ENCODE measurements at regions of chr16 and their contacts with region 1.

Region 1: DNA sequence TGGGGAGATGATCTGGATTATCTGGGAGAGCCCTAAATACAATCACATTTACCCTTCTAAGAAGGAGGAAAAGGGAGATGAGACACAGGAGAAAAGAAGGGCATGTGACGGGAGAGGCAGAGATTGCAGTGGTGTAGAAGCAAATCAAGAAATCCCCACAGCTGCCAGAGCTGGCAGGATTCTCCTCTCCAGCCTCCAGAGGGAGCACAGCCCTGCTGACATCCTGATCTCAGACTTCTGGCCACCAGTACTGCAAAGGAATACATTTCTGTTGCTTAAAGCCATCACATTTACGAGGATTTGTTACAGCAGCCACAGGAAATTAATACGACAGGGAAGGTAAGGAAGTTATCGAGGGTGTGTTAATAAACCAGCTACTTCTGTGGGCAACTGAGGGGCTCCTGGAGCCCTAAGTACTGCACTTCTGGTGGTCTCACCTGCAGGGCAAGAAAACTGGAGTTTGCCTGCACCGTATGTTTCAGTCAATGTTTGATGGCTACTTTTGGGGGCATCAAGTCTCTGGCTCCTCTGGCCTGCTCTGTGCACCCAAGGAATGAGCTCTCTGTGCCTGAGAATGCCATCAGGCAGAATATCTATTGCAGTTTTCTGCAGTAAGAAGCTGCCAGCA is 22.9 kb upstream of the CDH13 start:
- DNase-seq: peak; percentile 60 to 78
- ATAC-seq: peak; percentile 51
- H3K4me3 ChIP-seq: no peak overlapping the region
- H3K27ac ChIP-seq: no peak overlapping the region
- H3K4me1 ChIP-seq: no peaks in the 10 kb centered on the region
- H3K27me3 ChIP-seq: no peaks in the 10 kb centered on the region

Region 2: DNA sequence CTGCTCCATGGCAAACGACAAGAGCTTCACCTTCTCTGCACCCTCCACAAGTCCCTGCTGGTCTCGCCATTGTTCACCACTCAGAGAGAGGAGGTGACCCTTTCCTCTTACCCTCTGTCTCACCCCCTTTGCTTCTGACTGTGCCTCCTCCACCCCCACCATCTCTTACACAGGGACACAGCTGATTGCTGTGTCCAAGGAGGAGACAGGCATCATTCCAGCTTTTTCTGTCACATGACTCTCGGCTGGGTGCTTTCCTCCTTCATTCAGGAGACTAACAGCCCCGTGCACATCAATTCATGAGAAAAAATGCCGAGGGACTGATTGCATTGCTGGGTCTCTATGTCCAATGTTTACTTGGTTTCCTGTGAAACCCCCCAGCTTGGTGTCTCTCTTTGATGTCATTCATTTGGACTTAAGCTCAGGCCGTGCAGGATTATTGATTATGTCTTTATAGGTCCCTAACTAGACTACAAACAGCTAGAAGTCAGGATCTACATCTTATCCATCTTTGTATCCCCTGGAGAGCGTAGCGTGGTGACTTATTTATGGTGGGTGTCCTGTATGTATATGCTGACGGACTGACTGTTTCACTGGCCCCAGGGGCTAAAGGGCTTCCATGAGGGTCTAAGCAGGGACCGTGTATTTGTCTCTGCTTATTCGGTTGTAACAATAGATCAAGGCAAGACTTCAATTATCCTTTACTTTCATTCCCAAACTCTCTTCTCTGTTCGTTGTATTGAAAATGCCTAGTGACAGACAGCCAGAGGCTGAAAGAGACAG is 59.3 kb before region 1 on chr16:
- intact Hi-C with region 1: no loop called
- DNase-seq: no peak
- ATAC-seq: no peak
- H3K4me3 ChIP-seq: no peak overlapping the region
- H3K27ac ChIP-seq: no peak overlapping the region
- H3K4me1 ChIP-seq: no peaks in the 10 kb centered on the region
- H3K27me3 ChIP-seq: peaks cover 0 to 3% of the 10 kb centered on the region in 2 donors

Region 3: DNA sequence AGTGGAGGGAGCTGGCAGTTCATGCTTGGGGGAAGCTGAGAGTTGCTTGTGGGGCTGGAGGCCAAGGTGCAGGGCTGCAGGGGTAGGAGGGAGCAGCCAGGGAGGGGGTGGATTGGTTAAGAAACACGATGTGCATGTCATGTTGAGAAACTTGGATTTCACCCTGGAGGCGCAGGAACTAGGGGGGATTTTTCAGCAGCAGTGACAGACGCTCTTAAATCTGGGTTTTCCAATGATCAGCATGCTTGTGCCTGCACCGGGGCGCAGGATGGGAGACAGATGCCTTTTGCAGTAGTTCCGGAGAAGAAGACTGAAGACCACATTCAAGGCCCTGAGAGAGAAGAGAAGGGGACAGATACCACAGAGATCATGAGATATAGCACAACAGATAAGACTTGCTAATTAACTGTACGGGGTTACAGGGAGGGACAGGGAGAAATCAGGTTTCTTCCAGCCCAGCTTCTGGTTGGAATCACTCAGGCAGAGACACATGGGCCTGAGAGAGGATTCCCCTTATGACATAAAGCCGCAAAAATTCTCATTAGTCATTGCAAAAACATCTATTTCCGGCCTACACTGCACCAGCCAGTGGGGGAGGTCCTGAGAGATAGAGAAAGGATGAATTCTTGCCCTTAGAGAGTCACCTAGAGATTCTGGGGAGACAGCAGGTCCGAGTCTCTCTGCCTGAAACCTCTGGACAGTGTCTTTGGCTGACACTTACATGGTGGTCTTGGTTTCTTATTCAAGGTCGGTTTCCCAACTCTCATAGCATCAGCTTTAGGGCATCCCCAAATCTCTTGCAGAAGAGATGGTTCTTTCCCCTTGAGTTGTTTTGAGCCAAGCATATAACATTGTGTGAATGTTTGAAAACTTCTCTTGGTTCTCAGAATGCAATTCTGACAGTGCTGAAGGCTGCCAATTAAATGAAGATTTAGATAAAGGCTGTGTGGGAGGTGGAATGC is 49.9 kb after region 1 on chr16:
- intact Hi-C with region 1: no loop called
- DNase-seq: no peak
- ATAC-seq: no peak
- H3K4me3 ChIP-seq: no peak overlapping the region
- H3K27ac ChIP-seq: no peak overlapping the region
- H3K4me1 ChIP-seq: peaks cover 0 to 23% of the 10 kb centered on the region in 2 donors
- H3K27me3 ChIP-seq: no peaks in the 10 kb centered on the region

Region 4: DNA sequence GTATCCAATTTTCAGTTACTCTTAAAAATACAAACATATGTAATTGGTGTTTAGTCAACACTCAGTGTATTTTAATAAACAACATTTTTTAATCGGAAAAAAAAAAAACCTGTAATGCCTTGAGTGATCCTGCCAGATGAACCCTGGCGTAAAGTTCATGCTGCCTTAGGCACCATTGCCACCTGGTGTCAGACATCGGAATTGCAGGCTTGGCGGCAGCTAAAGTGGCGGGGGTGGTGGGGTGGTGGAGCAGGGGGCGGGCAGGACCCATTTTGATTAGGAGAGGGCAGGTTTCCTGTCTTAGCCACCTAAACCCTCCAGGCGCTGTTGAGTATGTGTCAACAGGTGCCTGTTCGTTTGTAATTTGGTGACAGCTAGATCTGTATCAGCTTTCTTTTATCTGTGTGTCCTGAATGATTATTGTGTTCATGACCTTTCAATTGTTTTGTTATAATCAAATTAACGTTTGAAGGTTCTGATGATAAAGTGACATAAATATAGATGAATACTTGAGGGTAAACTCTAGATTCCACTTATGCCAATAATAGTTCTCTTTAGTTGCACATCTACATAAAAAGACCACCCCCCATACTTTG is 611.6 kb after region 1 on chr16:
- intact Hi-C with region 1: loop called in 1 of 2 experiments (anchors 5 kb)
- DNase-seq: no peak
- ATAC-seq: no peak
- H3K4me3 ChIP-seq: no peak overlapping the region
- H3K27ac ChIP-seq: no peak overlapping the region
- H3K4me1 ChIP-seq: no peaks in the 10 kb centered on the region
- H3K27me3 ChIP-seq: no peaks in the 10 kb centered on the region

Measured in aorta (tissue), 5 donors.